Activated naive CD4-positive, alpha-beta T cell treated with anti-CD3 and anti-CD28 coated beads for 36 hours (primary cell): ENCODE measurements at regions of chr11 and their contacts with region 1.

Region 1: DNA sequence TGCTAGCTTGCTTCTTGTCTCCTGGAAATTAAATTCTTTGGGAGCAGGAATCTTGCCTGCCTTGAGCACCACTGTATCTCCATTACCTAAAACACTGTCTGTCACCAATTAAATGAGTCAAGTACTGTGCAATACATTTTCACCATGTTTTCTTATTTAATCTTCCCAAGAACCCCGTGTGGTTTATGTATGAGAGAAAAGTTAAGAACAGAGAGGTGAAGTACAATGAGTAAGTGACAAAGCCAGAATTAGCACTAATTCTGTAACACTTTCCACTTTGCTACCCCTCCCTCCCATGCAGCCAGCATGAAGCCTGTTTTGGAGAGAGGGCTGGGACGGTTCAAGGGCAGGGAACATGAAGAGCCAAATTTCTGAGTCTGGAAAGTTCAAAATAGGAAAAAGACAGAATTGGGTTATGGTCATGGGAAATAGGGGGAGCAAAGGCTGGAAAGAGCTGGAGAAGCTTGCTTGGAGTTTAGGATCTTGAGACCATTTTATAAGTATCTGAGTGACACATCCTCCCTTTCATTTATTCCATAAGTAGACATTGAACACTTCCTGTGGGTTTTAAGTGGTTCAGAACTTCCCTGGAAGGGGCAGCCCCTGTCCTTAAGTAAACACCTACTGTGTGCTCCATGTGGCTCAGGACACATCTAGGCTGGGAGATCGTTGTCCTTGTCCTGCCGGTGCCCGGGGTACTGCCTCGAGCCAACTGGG is 60.5 kb upstream of the CHST1 start:
- DNase-seq: peak; percentile 18
- H3K4me3 Mint-ChIP-seq: no peak overlapping the region
- H3K27ac Mint-ChIP-seq: peak overlapping the region; percentile 77
- H3K4me1 Mint-ChIP-seq: peaks cover 19% of the 10 kb centered on the region
- H3K27me3 Mint-ChIP-seq: peaks cover 8% of the 10 kb centered on the region

Region 2: DNA sequence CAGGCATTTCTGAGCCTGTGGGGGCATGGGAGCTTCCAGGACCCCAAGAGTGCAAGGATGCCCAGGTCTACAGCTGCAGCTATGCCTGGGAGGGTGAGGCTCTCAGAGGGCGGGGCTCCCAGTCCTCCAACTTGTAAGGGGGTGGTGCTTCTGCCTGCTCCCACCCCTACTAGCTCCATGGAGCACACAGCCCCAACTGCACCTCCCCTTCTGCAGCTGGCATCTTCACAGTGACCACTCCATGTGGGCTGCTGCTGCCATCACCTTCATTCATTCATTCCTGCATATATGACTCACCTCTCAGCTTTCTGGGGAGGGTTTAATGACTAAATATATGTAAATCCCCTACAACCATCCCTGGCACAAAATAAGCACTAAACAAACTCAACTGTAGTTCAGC is 104.3 kb before region 1 on chr11:
- CTCF ChIA-PET with region 1: no interaction called
- intact Hi-C with region 1: no loop called
- DNase-seq: no peak
- H3K4me3 Mint-ChIP-seq: no peak overlapping the region
- H3K27ac Mint-ChIP-seq: no peak overlapping the region
- H3K4me1 Mint-ChIP-seq: no peaks in the 10 kb centered on the region
- H3K27me3 Mint-ChIP-seq: peaks cover 21% of the 10 kb centered on the region

Region 3: DNA sequence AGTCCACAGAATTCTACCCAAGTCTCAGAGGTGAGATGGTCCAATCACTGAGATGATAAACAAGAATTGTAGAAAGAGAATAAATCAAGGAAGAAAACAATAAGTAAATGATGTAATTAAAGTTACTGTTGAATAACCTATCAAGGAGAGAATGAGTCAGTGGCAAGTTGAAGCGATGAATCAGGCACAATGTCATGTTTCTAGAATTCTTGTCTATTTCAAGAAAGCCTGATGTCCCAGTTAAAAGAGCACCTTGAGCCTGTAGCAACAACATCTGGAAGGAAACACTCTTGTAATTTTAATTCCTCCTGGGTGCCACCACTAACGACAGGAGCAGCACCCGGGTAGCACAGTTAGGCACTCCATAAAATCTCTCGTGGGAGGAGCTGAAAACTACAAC is 11.1 kb after region 1 on chr11:
- CTCF ChIA-PET with region 1: interaction called, 6 read pairs
- intact Hi-C with region 1: loop called (anchors 1 kb)
- DNase-seq: peak; percentile 21
- H3K4me3 Mint-ChIP-seq: no peak overlapping the region
- H3K27ac Mint-ChIP-seq: peak overlapping the region; percentile 68
- H3K4me1 Mint-ChIP-seq: peaks cover 16% of the 10 kb centered on the region
- H3K27me3 Mint-ChIP-seq: peaks cover 3% of the 10 kb centered on the region

Region 4: GRCh38 chr11:45765836-45766235 is 39.9 kb after region 1 on chr11:
- CTCF ChIA-PET with region 1: no interaction called
- intact Hi-C with region 1: no loop called
- DNase-seq: no peak
- H3K4me3 Mint-ChIP-seq: no peak overlapping the region
- H3K27ac Mint-ChIP-seq: no peak overlapping the region
- H3K4me1 Mint-ChIP-seq: no peaks in the 10 kb centered on the region
- H3K27me3 Mint-ChIP-seq: no peaks in the 10 kb centered on the region